ENCODE measurements at regions of chr16 and their contacts with region 1.

Region 1: GRCh38 chr16:50265260-50265659 is 1.1 kb upstream of the ADCY7 start:
- DNase-seq: no peak
- H3K4me3 ChIP-seq: no peak overlapping the region
- H3K27ac ChIP-seq: peak overlapping the region; percentile 12 to 35
- H3K4me1 ChIP-seq: peaks cover 8 to 18% of the 10 kb centered on the region in 2 donors
- H3K27me3 ChIP-seq: no peaks in the 10 kb centered on the region
- CTCF ChIP-seq: no peak

Region 2: DNA sequence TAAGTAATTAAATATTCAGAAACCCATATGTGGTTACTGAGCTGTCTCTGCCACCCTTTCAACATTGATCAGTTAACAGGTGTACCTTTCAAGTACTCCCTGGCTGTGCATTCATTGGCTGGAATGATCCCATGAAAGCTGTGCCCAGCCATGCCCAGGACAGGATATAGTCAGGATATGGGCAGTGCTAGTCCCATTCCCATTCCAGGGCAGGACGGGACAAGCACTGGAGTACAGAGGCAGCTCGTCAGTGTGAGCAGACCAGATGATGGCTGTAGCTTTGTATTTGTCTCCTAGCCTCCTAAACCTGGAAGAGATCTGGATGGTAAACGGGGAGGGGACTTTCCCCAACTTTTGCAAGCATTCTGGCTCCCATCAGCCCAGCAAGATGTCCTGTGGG is 177.0 kb before region 1 on chr16:
- intact Hi-C with region 1: no loop called
- DNase-seq: no peak
- H3K4me3 ChIP-seq: no peak overlapping the region
- H3K27ac ChIP-seq: no peak overlapping the region
- H3K4me1 ChIP-seq: no peaks in the 10 kb centered on the region
- H3K27me3 ChIP-seq: no peaks in the 10 kb centered on the region
- CTCF ChIP-seq: no peak

Region 3: DNA sequence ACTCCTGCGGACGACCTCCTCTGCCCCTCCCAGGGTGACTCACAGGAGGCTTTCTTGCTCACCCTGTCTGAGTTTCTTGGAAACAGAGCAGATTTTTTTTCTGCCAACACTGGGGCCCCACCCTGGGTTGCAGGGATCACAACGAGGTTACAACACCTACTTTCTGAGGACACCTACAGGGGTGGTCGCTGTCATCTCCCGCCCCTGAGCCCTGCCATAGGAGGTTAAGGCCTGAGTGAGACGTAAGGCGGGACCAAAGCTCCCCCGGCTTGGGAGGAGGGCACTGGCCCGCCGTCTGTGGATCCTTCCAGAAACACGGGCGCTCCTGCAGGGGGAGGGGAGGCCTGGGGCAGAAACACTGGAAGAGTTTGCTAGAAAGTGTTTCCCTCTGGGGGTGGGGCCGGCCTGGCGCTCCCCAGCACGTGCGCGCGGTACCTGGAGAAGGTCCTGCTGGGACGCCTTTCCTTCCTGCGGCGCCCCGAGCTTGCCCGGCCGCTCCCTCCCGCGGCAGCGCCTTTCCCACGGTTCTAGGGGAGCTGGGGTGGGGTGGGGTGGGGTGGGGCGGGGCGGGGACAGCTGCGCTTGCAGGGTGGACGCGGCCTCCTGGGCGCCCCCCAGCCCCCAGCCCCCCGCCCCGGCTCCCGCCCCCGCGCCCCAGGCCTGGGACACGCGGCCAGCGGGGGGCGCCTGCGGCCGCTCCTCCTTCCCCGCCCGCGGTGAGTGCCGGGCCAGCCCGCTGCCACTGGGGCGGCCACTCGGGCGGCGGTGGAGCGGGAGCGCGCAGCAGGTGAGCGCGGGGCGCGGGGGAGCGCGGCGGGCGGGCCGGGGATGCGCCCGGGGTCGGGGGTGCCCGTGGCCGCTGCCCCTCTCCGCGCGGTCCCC is 19.6 kb before region 1 on chr16:
- intact Hi-C with region 1: loop called (anchors 2 kb)
- DNase-seq: peak in 1 of 2 donors; percentile 81
- H3K4me3 ChIP-seq: peak overlapping the region; percentile 71 to 77
- H3K27ac ChIP-seq: peak overlapping the region in 1 of 2 donors; percentile 13
- H3K4me1 ChIP-seq: peaks cover 7 to 10% of the 10 kb centered on the region in 2 donors
- H3K27me3 ChIP-seq: no peaks in the 10 kb centered on the region
- CTCF ChIP-seq: peak in 1 of 3 experiments; percentile 19